ENCODE measurements at regions of chrX and their contacts with region 1.

Region 1: GRCh38 chrX:49915361-49916222 is 6.8 kb upstream of the CLCN5 start:
- DNase-seq: peak in 3 of 5 donors; percentile 25 to 32 (median 30)
- ATAC-seq: peak in 3 of 4 donors; percentile 68 to 72 (median 72)
- H3K4me3 ChIP-seq: no peak overlapping the region
- H3K27ac ChIP-seq: no peak overlapping the region
- H3K4me1 ChIP-seq: peaks cover 0 to 6% (median 0%) of the 10 kb centered on the region in 12 donors
- H3K27me3 ChIP-seq: peaks cover 0 to 14% (median 0%) of the 10 kb centered on the region in 9 donors
- CTCF ChIP-seq: peak; percentile 58 to 94 (median 74)
- POLR2A ChIP-seq: no peak

Region 2: DNA sequence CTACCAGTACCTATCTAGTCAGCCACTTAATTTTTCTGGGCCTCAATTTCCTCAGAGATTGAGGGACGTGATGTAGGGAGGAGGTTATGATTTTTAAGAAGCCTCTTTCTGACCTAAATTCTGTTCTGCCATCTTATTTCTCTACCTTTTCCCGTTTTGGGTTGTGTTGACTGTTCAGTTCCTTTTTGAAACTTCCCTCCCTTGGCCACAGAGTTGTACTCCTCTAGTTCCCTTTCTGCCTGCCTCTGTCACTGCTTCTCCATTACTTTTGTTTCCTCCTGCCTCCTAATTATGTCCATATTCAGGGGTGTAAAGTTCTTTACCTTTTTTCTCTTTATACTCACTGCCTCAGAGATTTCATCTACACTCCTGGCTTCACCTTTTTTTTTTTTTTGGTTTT is 32.2 kb after region 1 on chrX:
- intact Hi-C with region 1: no loop called
- DNase-seq: no peak
- ATAC-seq: no peak
- H3K4me3 ChIP-seq: no peak overlapping the region
- H3K27ac ChIP-seq: no peak overlapping the region
- H3K4me1 ChIP-seq: no peaks in the 10 kb centered on the region
- H3K27me3 ChIP-seq: no peaks in the 10 kb centered on the region
- CTCF ChIP-seq: no peak
- POLR2A ChIP-seq: no peak

Region 3: DNA sequence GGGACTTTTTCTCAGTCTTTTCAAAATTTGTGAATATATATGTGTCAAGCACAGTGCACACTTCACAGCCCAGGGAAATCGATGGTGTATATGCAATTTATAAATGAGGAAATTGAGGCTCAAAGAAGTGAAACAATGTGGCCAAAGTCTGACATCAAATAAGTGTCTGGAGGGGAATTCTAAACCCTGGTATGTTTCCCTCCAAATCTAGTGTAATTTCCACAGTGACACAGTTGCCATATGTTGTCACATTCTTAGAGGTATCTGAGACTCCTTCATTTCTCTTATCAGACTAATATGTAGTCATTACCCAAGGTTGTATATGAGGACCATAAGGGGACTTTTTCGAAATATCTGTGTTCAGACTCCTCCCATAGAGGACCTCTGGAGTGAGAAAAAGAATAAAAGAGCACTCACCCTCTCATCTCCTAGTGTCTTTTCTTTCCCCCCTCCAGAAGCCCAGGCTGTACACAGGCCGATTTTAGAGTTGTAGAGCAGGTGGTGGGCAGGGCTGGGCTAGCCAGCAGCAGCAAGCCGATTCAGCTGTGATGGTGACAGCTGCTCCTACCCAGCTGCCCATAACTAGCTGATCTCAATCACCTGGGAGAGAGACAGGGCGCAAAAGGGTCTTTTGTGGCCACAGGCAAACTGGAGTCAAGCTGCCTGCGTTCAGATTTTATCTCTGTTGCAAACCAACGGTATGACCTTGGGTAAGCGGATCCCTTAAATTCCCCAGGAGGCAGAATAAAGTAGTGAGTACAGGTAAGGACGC is 61.9 kb after region 1 on chrX:
- intact Hi-C with region 1: no loop called
- DNase-seq: no peak
- ATAC-seq: no peak
- H3K4me3 ChIP-seq: no peak overlapping the region
- H3K27ac ChIP-seq: no peak overlapping the region
- H3K4me1 ChIP-seq: no peaks in the 10 kb centered on the region
- H3K27me3 ChIP-seq: peaks cover 0 to 14% (median 0%) of the 10 kb centered on the region in 9 donors
- CTCF ChIP-seq: no peak
- POLR2A ChIP-seq: no peak

Region 4: DNA sequence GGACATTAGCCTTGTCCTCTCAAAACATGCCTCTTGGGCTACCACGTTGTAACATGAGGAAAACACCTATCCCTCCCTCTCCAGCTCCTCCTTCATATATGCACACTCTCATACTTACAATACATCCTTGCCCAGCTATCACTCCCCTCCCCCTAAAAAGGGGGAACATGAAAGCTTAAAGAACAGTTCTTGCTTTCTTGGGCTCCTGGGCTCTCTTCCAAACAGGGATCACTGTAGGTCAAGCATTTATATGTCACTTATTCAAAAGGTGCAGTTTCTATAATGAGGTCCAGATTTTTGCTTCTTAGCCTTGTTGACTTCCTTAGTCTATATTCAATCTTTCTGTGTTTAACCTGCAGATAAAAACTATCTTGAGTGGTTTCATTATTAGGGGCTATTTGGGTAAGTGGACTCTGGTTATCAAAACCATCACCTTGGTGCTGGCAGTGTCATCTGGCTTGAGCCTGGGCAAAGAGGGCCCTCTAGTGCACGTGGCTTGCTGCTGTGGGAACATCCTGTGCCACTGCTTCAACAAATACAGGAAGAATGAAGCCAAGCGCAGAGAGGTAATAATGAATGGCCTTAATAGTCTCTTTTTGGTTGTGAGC is 165.8 kb after region 1 on chrX:
- intact Hi-C with region 1: loop called (anchors 1 to 5 kb)
- DNase-seq: peak in 3 of 5 donors; percentile 19 to 37 (median 30)
- ATAC-seq: peak in 2 of 4 donors; percentile 53 to 55
- H3K4me3 ChIP-seq: no peak overlapping the region
- H3K27ac ChIP-seq: no peak overlapping the region
- H3K4me1 ChIP-seq: no peaks in the 10 kb centered on the region
- H3K27me3 ChIP-seq: no peaks in the 10 kb centered on the region
- CTCF ChIP-seq: peak; percentile 11 to 49 (median 34)
- POLR2A ChIP-seq: no peak

Measured in heart left ventricle (tissue), 16 donors.